ENCODE measurements at regions of chr2 and their contacts with region 1.

Region 1: GRCh38 chr2:39851651-39852110 is 72.6 kb upstream of the THUMPD2 start:
- DNase-seq: peak; percentile 47
- H3K4me3 ChIP-seq: no peak overlapping the region; the same call in 1 of the 2 replicates
- H3K27ac ChIP-seq: no peak overlapping the region
- H3K27me3 ChIP-seq: no peaks in the 10 kb centered on the region
- CTCF ChIP-seq: no peak

Region 2: GRCh38 chr2:39156107-39156506 is 695.6 kb before region 1 on chr2:
- CTCF ChIA-PET with region 1: no interaction called
- POLR2A ChIA-PET with region 1: no interaction called
- DNase-seq: no peak
- H3K4me3 ChIP-seq: no peak overlapping the region
- H3K27ac ChIP-seq: no peak overlapping the region
- H3K27me3 ChIP-seq: no peaks in the 10 kb centered on the region
- CTCF ChIP-seq: no peak

Region 3: GRCh38 chr2:39464864-39465263 is 386.8 kb before region 1 on chr2:
- CTCF ChIA-PET with region 1: no interaction called
- POLR2A ChIA-PET with region 1: no interaction called
- DNase-seq: no peak
- H3K4me3 ChIP-seq: no peak overlapping the region
- H3K27ac ChIP-seq: no peak overlapping the region
- H3K27me3 ChIP-seq: no peaks in the 10 kb centered on the region
- CTCF ChIP-seq: no peak

Region 4: GRCh38 chr2:39679805-39680204 is 171.9 kb before region 1 on chr2:
- CTCF ChIA-PET with region 1: no interaction called
- POLR2A ChIA-PET with region 1: no interaction called
- DNase-seq: no peak
- H3K4me3 ChIP-seq: no peak overlapping the region
- H3K27ac ChIP-seq: no peak overlapping the region
- H3K27me3 ChIP-seq: peaks cover 9% of the 10 kb centered on the region
- CTCF ChIP-seq: no peak

Region 5: GRCh38 chr2:39837856-39838453 is 13.7 kb before region 1 on chr2:
- CTCF ChIA-PET with region 1: interaction called, 46 read pairs
- POLR2A ChIA-PET with region 1: no interaction called
- DNase-seq: peak; percentile 11
- H3K4me3 ChIP-seq: no peak overlapping the region
- H3K27ac ChIP-seq: no peak overlapping the region
- H3K27me3 ChIP-seq: no peaks in the 10 kb centered on the region
- CTCF ChIP-seq: peak; percentile 95

Region 6: GRCh38 chr2:39875182-39875898 is 23.7 kb after region 1 on chr2:
- CTCF ChIA-PET with region 1: interaction called, 7 read pairs
- POLR2A ChIA-PET with region 1: interaction called, 11 read pairs
- DNase-seq: peak; percentile 91
- H3K4me3 ChIP-seq: no peak overlapping the region
- H3K27ac ChIP-seq: peak overlapping the region; percentile 84
- H3K27me3 ChIP-seq: no peaks in the 10 kb centered on the region
- CTCF ChIP-seq: no peak